ENCODE measurements at regions of chr2 and their contacts with region 1.

Region 1: GRCh38 chr2:25582077-25582830 is 91.1 kb downstream of the DTNB start:
- DNase-seq: no peak
- H3K4me3 ChIP-seq: no peak overlapping the region
- H3K27ac ChIP-seq: no peak overlapping the region
- H3K4me1 ChIP-seq: no peaks in the 10 kb centered on the region
- H3K27me3 ChIP-seq: no peaks in the 10 kb centered on the region
- CTCF ChIP-seq: no peak

Region 2: GRCh38 chr2:25700221-25700660 is 118.0 kb after region 1 on chr2:
- CTCF ChIA-PET with region 1: no interaction called
- dilution Hi-C with region 1: loop called (anchors 5 kb)
- in situ Hi-C with region 1: no loop called
- intact Hi-C with region 1: no loop called
- DNase-seq: peak; percentile 78
- H3K4me3 ChIP-seq: no peak overlapping the region
- H3K27ac ChIP-seq: no peak overlapping the region
- H3K4me1 ChIP-seq: peaks cover 15% of the 10 kb centered on the region
- H3K27me3 ChIP-seq: no peaks in the 10 kb centered on the region
- CTCF ChIP-seq: peak; percentile 84 to 93

Measured in mammary epithelial cell (primary cell).